ENCODE measurements at regions of chr1 and their contacts with region 1.

Region 1: GRCh38 chr1:220733090-220733601 is 15.0 kb upstream of the MTARC2 start:
- DNase-seq: peak; percentile 88
- H3K4me3 Mint-ChIP-seq: peak overlapping the region; percentile 24
- H3K27ac Mint-ChIP-seq: no peak overlapping the region
- H3K4me1 Mint-ChIP-seq: peaks cover 12% of the 10 kb centered on the region
- H3K27me3 Mint-ChIP-seq: no peaks in the 10 kb centered on the region

Region 2: GRCh38 chr1:220113136-220113695 is 619.9 kb before region 1 on chr1:
- CTCF ChIA-PET with region 1: interaction called, 3 read pairs
- POLR2A ChIA-PET with region 1: no interaction called
- intact Hi-C with region 1: loop called (anchors 5 kb)
- DNase-seq: no peak
- H3K4me3 Mint-ChIP-seq: no peak overlapping the region
- H3K27ac Mint-ChIP-seq: no peak overlapping the region
- H3K4me1 Mint-ChIP-seq: peaks cover 8% of the 10 kb centered on the region
- H3K27me3 Mint-ChIP-seq: no peaks in the 10 kb centered on the region

Region 3: DNA sequence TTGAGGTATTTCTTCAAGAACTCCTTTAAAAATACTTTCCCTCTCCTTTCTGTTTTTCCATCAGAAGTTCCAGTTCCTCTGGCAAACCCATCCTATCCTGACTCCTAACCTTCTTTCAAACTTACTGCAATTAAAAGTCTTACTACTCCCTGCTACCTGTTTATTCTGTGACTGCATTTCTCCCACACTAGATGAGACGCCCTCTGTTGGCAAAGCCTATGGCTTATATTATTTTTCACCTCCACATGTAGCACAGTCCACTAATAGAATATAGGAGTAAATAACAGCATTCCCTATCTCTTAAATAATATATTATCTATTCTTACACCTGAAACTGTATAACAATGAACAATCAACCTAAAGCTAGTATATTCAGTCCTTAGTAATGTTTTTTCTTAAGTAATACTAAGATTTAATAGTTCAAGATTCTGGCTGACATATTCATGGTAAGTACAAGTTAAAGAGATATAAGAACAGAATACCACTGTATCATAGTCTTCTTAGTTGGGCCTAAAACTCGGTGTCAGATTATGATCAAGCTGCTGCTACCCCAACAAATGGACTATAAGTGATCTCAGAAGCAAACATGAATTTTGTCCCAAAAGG is 515.7 kb before region 1 on chr1:
- CTCF ChIA-PET with region 1: interaction called, 11 read pairs
- POLR2A ChIA-PET with region 1: no interaction called
- intact Hi-C with region 1: loop called (anchors 1 kb)
- DNase-seq: no peak
- H3K4me3 Mint-ChIP-seq: no peak overlapping the region
- H3K27ac Mint-ChIP-seq: no peak overlapping the region
- H3K4me1 Mint-ChIP-seq: peaks cover 30% of the 10 kb centered on the region
- H3K27me3 Mint-ChIP-seq: no peaks in the 10 kb centered on the region

Region 4: GRCh38 chr1:220294846-220295301 is 438.3 kb before region 1 on chr1:
- CTCF ChIA-PET with region 1: interaction called, 10 read pairs
- POLR2A ChIA-PET with region 1: no interaction called
- intact Hi-C with region 1: loop called (anchors 1 kb)
- DNase-seq: no peak
- H3K4me3 Mint-ChIP-seq: no peak overlapping the region
- H3K27ac Mint-ChIP-seq: no peak overlapping the region
- H3K4me1 Mint-ChIP-seq: no peaks in the 10 kb centered on the region
- H3K27me3 Mint-ChIP-seq: peaks cover 8% of the 10 kb centered on the region

Region 5: GRCh38 chr1:220669005-220669404 is 64.1 kb before region 1 on chr1:
- CTCF ChIA-PET with region 1: no interaction called
- POLR2A ChIA-PET with region 1: no interaction called
- intact Hi-C with region 1: no loop called
- DNase-seq: no peak
- H3K4me3 Mint-ChIP-seq: no peak overlapping the region
- H3K27ac Mint-ChIP-seq: no peak overlapping the region
- H3K4me1 Mint-ChIP-seq: no peaks in the 10 kb centered on the region
- H3K27me3 Mint-ChIP-seq: peaks cover 15% of the 10 kb centered on the region

Region 6: GRCh38 chr1:220690140-220691025 is 42.8 kb before region 1 on chr1 and contains the start of gene C1orf115:
- CTCF ChIA-PET with region 1: interaction called, 7 read pairs
- POLR2A ChIA-PET with region 1: no interaction called
- intact Hi-C with region 1: loop called (anchors 1 kb)
- DNase-seq: peak; percentile 85
- H3K4me3 Mint-ChIP-seq: peak within 1 kb of the TSS; percentile 77
- H3K27ac Mint-ChIP-seq: no peak within 1 kb of the TSS
- H3K4me1 Mint-ChIP-seq: peaks cover 7% of the 10 kb centered on the region
- H3K27me3 Mint-ChIP-seq: peaks cover 8% of the 10 kb centered on the region
- total RNA-seq, gene C1orf115: 0.73 to 0.76 TPM

Region 7: GRCh38 chr1:220786337-220787068 is 53.4 kb after region 1 on chr1 and contains the start of gene MTARC1:
- CTCF ChIA-PET with region 1: no interaction called
- POLR2A ChIA-PET with region 1: no interaction called
- intact Hi-C with region 1: no loop called
- DNase-seq: no peak
- H3K4me3 Mint-ChIP-seq: peak within 1 kb of the TSS; percentile 18
- H3K27ac Mint-ChIP-seq: no peak within 1 kb of the TSS
- H3K4me1 Mint-ChIP-seq: peaks cover 3% of the 10 kb centered on the region
- H3K27me3 Mint-ChIP-seq: peaks cover 61% of the 10 kb centered on the region
- total RNA-seq, gene MTARC1: not detected

Region 8: GRCh38 chr1:221263831-221264767 is 531.0 kb after region 1 on chr1:
- CTCF ChIA-PET with region 1: no interaction called
- POLR2A ChIA-PET with region 1: no interaction called
- intact Hi-C with region 1: no loop called
- DNase-seq: peak; percentile 38
- H3K4me3 Mint-ChIP-seq: no peak overlapping the region
- H3K27ac Mint-ChIP-seq: no peak overlapping the region
- H3K4me1 Mint-ChIP-seq: no peaks in the 10 kb centered on the region
- H3K27me3 Mint-ChIP-seq: peaks cover 3% of the 10 kb centered on the region

Measured in activated CD4-positive, alpha-beta memory T cell treated with anti-CD3 and anti-CD28 coated beads for 36 hours (primary cell).